GM12878 (cell line): ENCODE measurements at regions of chr20 and their contacts with region 1.

Region 1: DNA sequence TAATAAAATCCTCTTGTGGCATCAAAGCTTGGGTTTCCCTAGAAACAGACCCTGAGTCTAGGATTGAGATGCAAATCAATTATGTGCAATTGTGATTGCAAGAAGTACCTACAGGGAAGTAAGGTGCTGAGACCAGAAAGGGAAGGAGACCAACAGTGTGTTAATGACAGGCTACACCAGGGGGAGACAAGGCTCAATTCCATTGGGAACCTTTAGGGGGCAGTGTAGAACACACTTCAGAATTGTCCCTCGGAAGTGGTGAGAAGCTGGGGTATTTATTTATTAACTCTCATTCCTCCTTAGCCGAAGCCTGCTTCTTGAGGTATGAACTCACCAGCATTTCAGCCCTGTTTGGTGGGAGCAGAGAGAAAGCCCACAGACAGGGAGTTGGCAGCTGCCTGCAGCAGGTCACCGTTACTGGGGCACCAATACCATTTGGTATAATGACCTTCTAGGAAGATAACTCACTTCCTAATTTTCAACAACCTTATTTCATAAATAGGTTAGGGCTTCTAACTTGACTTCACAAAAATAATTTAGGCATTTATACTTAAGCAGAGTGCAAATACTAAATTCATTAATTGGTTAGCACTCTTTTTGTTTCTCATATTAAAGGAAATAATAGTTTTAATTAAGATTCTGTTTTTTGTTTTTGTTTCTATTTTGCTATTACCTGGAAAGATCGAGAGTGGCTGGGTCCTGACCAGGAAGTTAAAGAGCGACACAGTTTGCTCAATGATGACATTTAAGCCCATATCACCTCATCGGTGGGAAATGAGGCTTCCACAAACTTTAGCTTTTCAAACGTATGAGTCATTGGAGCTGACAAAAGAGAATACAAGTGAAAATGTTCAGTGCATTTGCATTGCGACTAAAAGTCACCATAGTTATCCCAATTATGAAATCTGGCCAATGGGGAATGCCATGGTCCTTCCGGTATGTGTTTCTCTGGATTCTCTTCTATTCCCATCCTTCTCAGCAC is 94.8 kb downstream of the BTBD3 start:
- DNase-seq: peak; percentile 12
- ATAC-seq: peak; percentile 96
- H3K4me3 ChIP-seq: no peak overlapping the region
- H3K27ac ChIP-seq: no peak overlapping the region
- H3K4me1 ChIP-seq: no peaks in the 10 kb centered on the region
- H3K27me3 ChIP-seq: no peaks in the 10 kb centered on the region
- CTCF ChIP-seq: peak; percentile 79 to 91 (median 89)
- EP300 ChIP-seq: no peak
- POLR2A ChIP-seq: no peak
- RAD21 ChIP-seq: no peak

Region 2: DNA sequence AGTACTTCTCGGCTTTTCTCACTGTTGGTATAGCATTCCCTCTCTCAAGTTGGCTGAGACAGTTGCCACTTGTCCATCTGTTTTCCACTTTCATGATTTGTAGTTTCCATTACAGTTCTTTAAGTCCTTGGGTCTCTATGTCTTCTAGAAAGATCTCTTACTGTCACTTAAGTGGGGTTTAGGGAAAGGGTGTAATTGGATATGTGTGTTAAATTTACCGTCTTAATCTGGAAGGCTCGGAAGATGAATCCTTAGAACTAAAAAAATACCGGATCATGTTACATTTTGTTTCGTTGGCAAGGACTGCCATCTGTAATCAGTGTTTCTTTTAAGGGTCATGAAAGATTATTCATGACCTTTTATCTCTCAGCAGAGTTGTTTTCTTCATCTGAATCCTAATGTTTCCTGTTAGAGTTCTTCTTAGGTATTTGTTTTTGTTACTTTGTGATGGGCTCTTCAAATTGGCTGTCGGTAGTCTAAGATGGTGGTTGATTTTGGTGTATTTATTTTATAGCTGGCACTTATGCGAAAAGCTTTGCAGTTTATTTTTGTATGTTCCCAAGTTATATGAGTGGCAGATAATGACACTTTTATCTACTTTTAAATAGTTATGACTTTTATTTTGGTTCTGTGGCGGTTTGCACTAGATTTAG is 116.6 kb before region 1 on chr20:
- CTCF ChIA-PET with region 1: no interaction called
- POLR2A ChIA-PET with region 1: no interaction called
- RAD21 ChIA-PET with region 1: no interaction called
- SMC1A ChIA-PET with region 1: no interaction called
- in situ Hi-C with region 1: no loop called
- intact Hi-C with region 1: no loop called
- DNase-seq: no peak
- ATAC-seq: no peak
- H3K4me3 ChIP-seq: no peak overlapping the region
- H3K27ac ChIP-seq: no peak overlapping the region
- H3K4me1 ChIP-seq: no peaks in the 10 kb centered on the region
- H3K27me3 ChIP-seq: no peaks in the 10 kb centered on the region
- CTCF ChIP-seq: no peak
- EP300 ChIP-seq: no peak
- POLR2A ChIP-seq: no peak
- RAD21 ChIP-seq: no peak

Region 3: GRCh38 chr20:11912013-11912658 is 100.4 kb before region 1 on chr20:
- CTCF ChIA-PET with region 1: interaction called, 24 read pairs
- POLR2A ChIA-PET with region 1: no interaction called
- RAD21 ChIA-PET with region 1: interaction called, 14 read pairs
- SMC1A ChIA-PET with region 1: interaction called, 7 read pairs
- in situ Hi-C with region 1: no loop called
- intact Hi-C with region 1: no loop called
- DNase-seq: no peak
- ATAC-seq: peak; percentile 80
- H3K4me3 ChIP-seq: no peak overlapping the region
- H3K27ac ChIP-seq: no peak overlapping the region
- H3K4me1 ChIP-seq: no peaks in the 10 kb centered on the region
- H3K27me3 ChIP-seq: no peaks in the 10 kb centered on the region
- CTCF ChIP-seq: peak; percentile 38 to 50 (median 40); a peak in 4 of 6 replicates
- EP300 ChIP-seq: no peak
- POLR2A ChIP-seq: no peak
- RAD21 ChIP-seq: peak; percentile 25; the same call in 1 of the 2 replicates

Region 4: DNA sequence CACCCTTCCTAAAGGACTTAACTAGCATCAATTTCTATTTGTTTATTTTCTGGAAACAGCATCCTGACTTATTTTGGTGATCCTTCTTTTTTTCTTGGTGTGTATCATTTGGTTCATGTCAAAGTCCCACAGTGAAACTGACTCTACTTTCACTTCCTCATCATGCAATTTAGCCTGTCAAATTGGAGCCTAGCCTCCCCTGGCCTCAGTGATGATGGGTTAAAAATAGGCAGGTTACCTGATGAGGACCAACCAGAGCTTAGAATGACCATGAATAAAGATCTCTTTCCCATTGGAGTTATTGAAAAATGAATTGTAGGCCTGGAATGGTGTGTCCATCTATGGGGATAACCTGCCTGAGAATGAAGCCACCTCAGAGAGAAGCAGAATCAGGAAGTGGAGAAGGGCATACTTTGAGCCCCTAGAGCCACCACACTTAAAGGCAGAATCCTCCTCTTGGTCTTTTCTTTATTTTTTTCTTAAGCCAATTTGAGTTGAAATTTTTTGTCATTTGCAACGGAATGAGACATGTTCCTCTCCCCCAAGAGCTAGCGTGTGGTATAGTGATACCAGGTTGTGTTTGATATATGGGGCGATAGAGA is 10.8 kb after region 1 on chr20:
- CTCF ChIA-PET with region 1: interaction called, 11 read pairs
- POLR2A ChIA-PET with region 1: interaction called, 3 read pairs
- RAD21 ChIA-PET with region 1: no interaction called
- SMC1A ChIA-PET with region 1: interaction called, 3 read pairs
- in situ Hi-C with region 1: no loop called
- intact Hi-C with region 1: no loop called
- DNase-seq: no peak
- ATAC-seq: peak; percentile 78
- H3K4me3 ChIP-seq: no peak overlapping the region
- H3K27ac ChIP-seq: no peak overlapping the region
- H3K4me1 ChIP-seq: no peaks in the 10 kb centered on the region
- H3K27me3 ChIP-seq: no peaks in the 10 kb centered on the region
- CTCF ChIP-seq: no peak
- EP300 ChIP-seq: no peak
- POLR2A ChIP-seq: no peak
- RAD21 ChIP-seq: no peak

Region 5: GRCh38 chr20:12037521-12037920 is 25.0 kb after region 1 on chr20:
- CTCF ChIA-PET with region 1: interaction called, 15 read pairs
- POLR2A ChIA-PET with region 1: no interaction called
- RAD21 ChIA-PET with region 1: no interaction called
- SMC1A ChIA-PET with region 1: interaction called, 4 read pairs
- in situ Hi-C with region 1: no loop called
- intact Hi-C with region 1: no loop called
- DNase-seq: no peak
- ATAC-seq: no peak
- H3K4me3 ChIP-seq: no peak overlapping the region
- H3K27ac ChIP-seq: no peak overlapping the region
- H3K4me1 ChIP-seq: no peaks in the 10 kb centered on the region
- H3K27me3 ChIP-seq: no peaks in the 10 kb centered on the region
- CTCF ChIP-seq: no peak
- EP300 ChIP-seq: no peak
- POLR2A ChIP-seq: no peak
- RAD21 ChIP-seq: no peak

Region 6: DNA sequence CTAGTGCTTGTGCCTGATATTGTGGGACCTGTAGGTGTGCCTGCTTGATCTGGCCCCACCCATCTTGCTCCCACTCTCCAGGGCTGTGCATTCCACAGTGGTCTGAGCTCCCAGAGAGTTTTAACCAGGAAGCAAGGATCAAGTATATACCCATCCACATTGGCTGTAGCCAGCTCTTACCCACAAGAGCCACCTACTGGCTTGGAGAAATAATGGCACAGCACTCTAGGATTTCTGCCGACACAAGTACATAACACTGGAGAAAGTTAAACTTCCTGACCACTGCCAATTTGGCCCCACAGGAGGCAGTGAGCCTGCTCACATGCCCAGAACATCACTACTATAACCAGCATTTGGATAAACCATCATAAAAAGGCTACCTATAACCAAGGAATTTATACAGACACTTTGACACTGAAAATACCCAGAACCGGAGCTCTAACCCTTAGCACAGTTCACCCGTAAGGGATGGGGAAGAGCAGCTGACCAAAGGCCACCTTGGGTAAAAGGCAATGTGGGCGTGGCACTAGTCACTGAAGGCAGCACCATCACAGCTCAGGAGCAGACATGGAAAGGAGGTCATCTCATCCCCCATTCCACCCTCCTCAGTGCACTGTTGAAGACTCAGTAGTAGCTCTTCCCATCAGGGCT is 345.6 kb after region 1 on chr20:
- CTCF ChIA-PET with region 1: interaction called, 10 read pairs
- POLR2A ChIA-PET with region 1: no interaction called
- RAD21 ChIA-PET with region 1: interaction called, 6 read pairs
- SMC1A ChIA-PET with region 1: no interaction called
- in situ Hi-C with region 1: no loop called
- intact Hi-C with region 1: no loop called
- DNase-seq: no peak
- ATAC-seq: no peak
- H3K4me3 ChIP-seq: no peak overlapping the region
- H3K27ac ChIP-seq: no peak overlapping the region
- H3K4me1 ChIP-seq: no peaks in the 10 kb centered on the region
- H3K27me3 ChIP-seq: no peaks in the 10 kb centered on the region
- CTCF ChIP-seq: no peak
- EP300 ChIP-seq: no peak
- POLR2A ChIP-seq: no peak
- RAD21 ChIP-seq: no peak